Sigmoid colon (tissue), 7 donors: ENCODE measurements at regions of chr19 and their contacts with region 1.

Region 1: DNA sequence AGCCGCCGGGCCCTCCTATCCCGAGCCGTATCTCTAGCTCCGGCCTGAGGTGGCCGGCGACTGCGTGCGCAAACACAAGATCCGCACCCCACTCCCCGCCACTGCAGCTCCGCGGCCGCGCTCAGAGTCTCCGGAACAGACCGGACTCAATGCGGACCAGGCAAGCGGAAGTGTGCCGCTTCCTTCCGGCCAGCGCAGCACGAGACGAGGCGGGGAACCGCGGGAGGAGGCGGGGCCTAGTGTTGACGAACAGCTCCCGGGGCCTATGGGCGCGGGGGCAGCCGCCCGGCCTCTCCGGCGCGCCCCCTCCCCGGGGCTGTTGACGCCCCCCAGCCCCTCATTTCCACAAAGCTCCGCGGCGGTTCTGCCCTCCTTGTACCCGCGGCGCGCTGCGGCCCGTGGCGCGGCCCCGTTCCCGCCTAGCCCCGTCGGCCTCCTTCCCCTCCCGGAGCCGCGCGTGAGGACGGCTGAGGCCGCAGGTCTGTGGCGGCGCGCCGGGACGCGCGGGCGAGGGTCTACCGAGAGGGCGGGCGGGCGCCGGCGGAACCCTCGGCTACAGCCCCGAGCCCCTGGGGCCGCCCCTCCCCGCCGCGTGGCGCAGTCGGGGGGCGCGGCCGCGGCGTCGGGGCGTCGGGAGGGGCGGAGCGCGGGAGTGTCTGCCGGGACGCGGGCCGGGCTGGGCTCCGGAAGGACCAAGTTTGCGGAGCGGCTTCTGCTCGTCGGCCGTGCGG is at the start of gene DPY19L3:
- DNase-seq: peak; percentile 98
- H3K4me3 ChIP-seq: peak within 1 kb of the TSS; percentile 71 to 97 (median 84)
- H3K27ac ChIP-seq: peak within 1 kb of the TSS; percentile 96 to 100 (median 98)
- H3K4me1 ChIP-seq: peaks cover 0 to 23% (median 15%) of the 10 kb centered on the region in 4 donors
- H3K27me3 ChIP-seq: no peaks in the 10 kb centered on the region
- CTCF ChIP-seq: no peak
- EP300 ChIP-seq: peak in 1 of 4 donors; percentile 15
- POLR2A ChIP-seq: peak; percentile 86 to 89
- total RNA-seq, gene DPY19L3: 11.4 to 33.5 (median 25.0) TPM

Region 2: DNA sequence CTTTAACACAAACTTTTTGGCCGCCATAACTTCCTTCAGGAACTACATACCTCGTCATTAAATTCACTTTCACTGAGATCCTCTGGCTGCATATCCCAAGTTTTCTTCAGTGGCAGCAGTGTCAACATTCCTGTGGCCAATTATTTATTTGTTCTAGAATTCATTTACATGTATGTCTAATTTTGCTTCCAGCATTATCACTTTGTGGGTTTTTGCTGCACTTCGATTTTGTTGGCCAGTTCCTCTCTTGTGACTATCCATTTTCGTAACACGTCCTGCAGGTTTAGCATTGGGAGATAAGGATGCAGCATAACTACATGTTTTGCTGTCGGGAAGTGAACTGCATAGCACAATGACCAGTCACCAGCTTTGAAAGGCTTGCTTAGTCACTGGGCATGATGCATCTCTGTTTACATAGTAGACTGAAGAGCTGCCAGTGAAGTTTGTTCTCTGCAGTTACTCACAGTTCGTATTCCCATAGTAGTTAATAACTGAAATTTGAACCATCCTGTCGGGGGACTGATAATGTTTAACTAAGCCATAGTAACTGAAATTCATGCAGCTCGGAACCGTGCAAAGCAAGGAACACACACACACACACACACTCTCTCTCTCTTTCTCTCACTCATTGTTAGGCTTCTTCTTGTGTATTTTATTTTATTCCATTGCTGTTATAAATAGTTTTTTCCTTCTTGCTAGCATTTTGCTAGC is 31.9 kb before region 1 on chr19:
- intact Hi-C with region 1: loop called (anchors 5 kb)
- DNase-seq: no peak
- H3K4me3 ChIP-seq: no peak overlapping the region
- H3K27ac ChIP-seq: peak overlapping the region; percentile 52 to 74 (median 66)
- H3K4me1 ChIP-seq: peaks cover 0 to 22% (median 20%) of the 10 kb centered on the region in 4 donors
- H3K27me3 ChIP-seq: no peaks in the 10 kb centered on the region
- CTCF ChIP-seq: no peak
- EP300 ChIP-seq: peak in 2 of 4 donors; percentile 56 to 68
- POLR2A ChIP-seq: no peak

Region 3: DNA sequence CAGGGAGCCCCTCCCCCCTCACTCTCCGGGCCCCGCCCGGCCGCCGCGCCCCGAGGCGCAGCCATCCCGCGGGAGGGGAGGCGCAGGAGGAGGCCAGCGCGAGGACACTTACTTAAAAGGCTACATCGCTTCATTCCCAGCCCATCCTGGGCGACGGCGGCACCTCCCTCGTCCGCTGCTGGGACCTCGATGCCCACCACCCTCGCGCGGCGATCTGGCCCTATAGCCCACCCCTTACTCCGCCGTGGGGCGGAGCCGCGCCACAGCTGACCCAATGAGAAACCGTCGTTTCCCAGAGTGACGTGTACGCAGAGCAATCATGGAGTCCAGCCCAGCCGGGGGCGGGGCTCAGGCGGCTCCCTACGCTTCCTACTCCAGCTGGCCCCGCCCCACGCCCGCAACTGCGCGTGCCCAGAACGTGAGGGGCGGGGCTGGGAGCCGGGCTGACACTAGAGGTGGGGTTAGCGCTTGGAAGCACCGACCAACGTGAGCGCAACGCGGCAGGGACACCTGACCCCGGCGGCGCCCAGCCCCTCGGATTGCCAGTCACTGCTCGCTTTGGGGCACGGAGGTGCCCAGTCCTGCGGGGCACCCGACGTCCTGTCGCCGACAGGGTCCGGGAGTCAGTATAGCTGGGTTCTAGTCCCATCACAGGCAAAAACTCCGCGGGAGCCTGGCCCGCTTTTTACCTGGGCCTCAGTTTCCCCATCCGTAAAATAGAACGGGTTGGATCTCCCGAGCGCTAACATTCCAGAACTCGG is 269.5 kb after region 1 on chr19 and contains the start of gene ANKRD27:
- intact Hi-C with region 1: no loop called
- DNase-seq: peak; percentile 99
- H3K4me3 ChIP-seq: peak within 1 kb of the TSS; percentile 74 to 99 (median 85)
- H3K27ac ChIP-seq: peak within 1 kb of the TSS; percentile 87 to 93 (median 88)
- H3K4me1 ChIP-seq: peaks cover 0 to 40% (median 34%) of the 10 kb centered on the region in 4 donors
- H3K27me3 ChIP-seq: peaks cover 0 to 23% (median 12%) of the 10 kb centered on the region in 3 donors
- CTCF ChIP-seq: no peak
- EP300 ChIP-seq: peak in 1 of 4 donors; percentile 6
- POLR2A ChIP-seq: peak; percentile 30 to 45
- total RNA-seq, gene ANKRD27: 34.1 to 48.5 (median 40.4) TPM